Activated CD4-positive, alpha-beta memory T cell treated with anti-CD3 and anti-CD28 coated beads for 36 hours (primary cell): ENCODE measurements at regions of chr4 and their contacts with region 1.

Region 1: DNA sequence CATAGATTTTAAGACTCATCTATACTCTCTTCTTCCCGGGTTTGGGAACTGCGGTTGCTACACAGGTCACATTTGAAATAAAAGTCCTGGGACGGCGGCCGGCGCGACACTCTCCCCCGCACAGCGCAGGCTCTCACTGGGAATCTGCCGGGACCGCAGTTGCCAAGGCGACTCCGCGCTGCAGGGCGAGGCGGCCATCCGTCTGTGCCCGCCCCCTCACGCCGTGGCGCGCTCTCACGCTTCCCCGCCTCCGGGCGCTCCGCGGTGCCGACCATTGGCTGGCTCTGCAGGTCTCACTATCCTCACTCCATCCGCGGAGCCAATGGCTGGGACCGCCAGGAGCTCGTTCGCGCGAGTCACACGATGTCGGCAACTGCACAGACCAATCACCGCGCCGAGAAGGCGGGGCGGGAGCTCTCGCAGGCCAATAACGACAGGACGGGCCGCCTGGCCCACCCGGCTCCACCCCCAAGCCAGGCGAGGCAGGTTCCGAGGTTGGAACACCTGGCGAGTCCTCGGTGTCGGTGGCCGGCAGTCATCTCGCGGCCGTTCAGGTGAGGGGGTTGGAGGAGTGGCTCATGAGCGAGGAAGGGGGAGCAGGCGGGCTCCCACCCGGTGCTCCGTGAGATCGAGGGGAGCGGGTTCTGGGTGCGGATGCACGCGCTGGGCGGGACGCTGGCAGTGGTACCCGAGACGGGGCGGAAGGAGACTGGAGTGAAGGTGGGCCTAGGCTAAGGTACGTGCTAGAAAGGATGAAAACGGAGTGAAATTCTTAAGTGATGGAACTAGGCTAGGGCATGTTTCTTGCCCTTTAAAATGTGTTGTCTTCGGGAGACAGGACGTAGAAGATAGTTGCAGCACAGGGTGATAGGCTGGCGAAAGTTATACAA is at the start of gene MSMO1:
- DNase-seq: peak; percentile 99
- H3K4me3 Mint-ChIP-seq: no peak within 1 kb of the TSS
- H3K27ac Mint-ChIP-seq: no peak within 1 kb of the TSS
- H3K4me1 Mint-ChIP-seq: peaks cover 37% of the 10 kb centered on the region
- H3K27me3 Mint-ChIP-seq: no peaks in the 10 kb centered on the region
- total RNA-seq, gene MSMO1: 63.7 to 67.1 TPM

Region 2: GRCh38 chr4:164956766-164957643 is 370.5 kb before region 1 on chr4:
- CTCF ChIA-PET with region 1: no interaction called
- POLR2A ChIA-PET with region 1: no interaction called
- intact Hi-C with region 1: loop called (anchors 2 kb)
- DNase-seq: peak; percentile 87
- H3K4me3 Mint-ChIP-seq: peak overlapping the region; percentile 90
- H3K27ac Mint-ChIP-seq: no peak overlapping the region
- H3K4me1 Mint-ChIP-seq: peaks cover 14% of the 10 kb centered on the region
- H3K27me3 Mint-ChIP-seq: peaks cover 1% of the 10 kb centered on the region

Region 3: DNA sequence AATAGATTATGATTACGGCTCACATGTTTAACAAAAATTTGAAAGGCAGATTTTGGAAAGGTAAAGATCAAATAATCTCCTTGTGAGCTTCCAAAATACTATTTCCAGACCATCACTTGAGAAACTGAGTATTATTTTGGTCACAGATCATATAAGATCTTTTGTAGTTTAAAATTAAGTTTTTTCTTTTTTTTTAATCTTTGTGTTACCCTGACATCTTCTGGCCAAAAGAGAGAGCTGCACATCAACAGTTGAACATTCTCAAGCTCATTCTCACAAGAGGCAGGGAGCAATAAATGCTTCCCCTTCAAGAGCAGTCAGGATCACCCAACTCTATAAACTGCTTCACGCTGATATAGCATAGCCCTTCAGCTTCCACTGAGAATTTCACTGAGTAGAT is 230.7 kb before region 1 on chr4:
- CTCF ChIA-PET with region 1: no interaction called
- POLR2A ChIA-PET with region 1: no interaction called
- intact Hi-C with region 1: no loop called
- DNase-seq: no peak
- H3K4me3 Mint-ChIP-seq: no peak overlapping the region
- H3K27ac Mint-ChIP-seq: no peak overlapping the region
- H3K4me1 Mint-ChIP-seq: no peaks in the 10 kb centered on the region
- H3K27me3 Mint-ChIP-seq: no peaks in the 10 kb centered on the region

Region 4: GRCh38 chr4:165131247-165131832 is 196.1 kb before region 1 on chr4:
- CTCF ChIA-PET with region 1: interaction called, 12 read pairs
- POLR2A ChIA-PET with region 1: no interaction called
- intact Hi-C with region 1: loop called (anchors 1 kb)
- DNase-seq: peak; percentile 84
- H3K4me3 Mint-ChIP-seq: no peak overlapping the region
- H3K27ac Mint-ChIP-seq: no peak overlapping the region
- H3K4me1 Mint-ChIP-seq: no peaks in the 10 kb centered on the region
- H3K27me3 Mint-ChIP-seq: peaks cover 13% of the 10 kb centered on the region

Region 5: GRCh38 chr4:165207431-165208220 is 119.8 kb before region 1 on chr4 and contains the start of gene KLHL2:
- CTCF ChIA-PET with region 1: interaction called, 3 read pairs
- POLR2A ChIA-PET with region 1: interaction called, 4 read pairs
- intact Hi-C with region 1: loop called (anchors 1 kb)
- DNase-seq: peak; percentile 74
- H3K4me3 Mint-ChIP-seq: peak within 1 kb of the TSS; percentile 88
- H3K27ac Mint-ChIP-seq: peak within 1 kb of the TSS; percentile 86
- H3K4me1 Mint-ChIP-seq: peaks cover 65% of the 10 kb centered on the region
- H3K27me3 Mint-ChIP-seq: no peaks in the 10 kb centered on the region
- total RNA-seq, gene KLHL2: 25.0 to 26.0 TPM

Region 6: GRCh38 chr4:165301833-165302232 is 25.6 kb before region 1 on chr4:
- CTCF ChIA-PET with region 1: no interaction called
- POLR2A ChIA-PET with region 1: no interaction called
- intact Hi-C with region 1: loop called (anchors 1 kb)
- DNase-seq: peak; percentile 15
- H3K4me3 Mint-ChIP-seq: peak overlapping the region; percentile 58
- H3K27ac Mint-ChIP-seq: peak overlapping the region; percentile 34
- H3K4me1 Mint-ChIP-seq: peaks cover 12% of the 10 kb centered on the region
- H3K27me3 Mint-ChIP-seq: no peaks in the 10 kb centered on the region